ENCODE measurements at regions of chr10 and their contacts with region 1.

Region 1: GRCh38 chr10:58384999-58385783 is at the start of gene TFAM:
- DNase-seq: peak; percentile 96 to 98 (median 97)
- ATAC-seq: peak; percentile 95
- H3K4me3 ChIP-seq: peak within 1 kb of the TSS; percentile 86
- H3K27ac ChIP-seq: peak within 1 kb of the TSS; percentile 85
- H3K4me1 ChIP-seq: peaks cover 11 to 18% of the 10 kb centered on the region in 2 experiments
- H3K27me3 ChIP-seq: no peaks in the 10 kb centered on the region
- CTCF ChIP-seq: peak; percentile 83 to 91 (median 90)
- EP300 ChIP-seq: peak; percentile 40; the same call in 1 of the 2 replicates
- POLR2A ChIP-seq: peak; percentile 99
- RAD21 ChIP-seq: peak; percentile 86 to 91
- polyA plus RNA-seq, gene TFAM: 175 to 227 TPM

Region 2: GRCh38 chr10:58081353-58081752 is 303.8 kb before region 1 on chr10:
- CTCF ChIA-PET with region 1: no interaction called
- POLR2A ChIA-PET with region 1: no interaction called
- in situ Hi-C with region 1: no loop called
- intact Hi-C with region 1: no loop called
- DNase-seq: no peak
- ATAC-seq: no peak
- H3K4me3 ChIP-seq: no peak overlapping the region
- H3K27ac ChIP-seq: no peak overlapping the region
- H3K4me1 ChIP-seq: no peaks in the 10 kb centered on the region
- H3K27me3 ChIP-seq: no peaks in the 10 kb centered on the region
- CTCF ChIP-seq: no peak
- EP300 ChIP-seq: no peak
- POLR2A ChIP-seq: no peak
- RAD21 ChIP-seq: no peak

Region 3: GRCh38 chr10:58177362-58177947 is 207.7 kb before region 1 on chr10:
- CTCF ChIA-PET with region 1: interaction called, 10 read pairs
- POLR2A ChIA-PET with region 1: no interaction called
- in situ Hi-C with region 1: loop called (anchors 10 kb)
- intact Hi-C with region 1: loop called (anchors 1 kb)
- DNase-seq: peak; percentile 17 to 42 (median 20)
- ATAC-seq: peak; percentile 58
- H3K4me3 ChIP-seq: no peak overlapping the region
- H3K27ac ChIP-seq: no peak overlapping the region
- H3K4me1 ChIP-seq: peaks cover 0 to 16% of the 10 kb centered on the region in 2 experiments; a peak in 2 of 5 replicates
- H3K27me3 ChIP-seq: no peaks in the 10 kb centered on the region
- CTCF ChIP-seq: peak in 2 of 3 experiments; percentile 56 to 83; a peak in 4 of 6 replicates
- EP300 ChIP-seq: no peak
- POLR2A ChIP-seq: no peak
- RAD21 ChIP-seq: peak; percentile 84 to 90

Region 4: DNA sequence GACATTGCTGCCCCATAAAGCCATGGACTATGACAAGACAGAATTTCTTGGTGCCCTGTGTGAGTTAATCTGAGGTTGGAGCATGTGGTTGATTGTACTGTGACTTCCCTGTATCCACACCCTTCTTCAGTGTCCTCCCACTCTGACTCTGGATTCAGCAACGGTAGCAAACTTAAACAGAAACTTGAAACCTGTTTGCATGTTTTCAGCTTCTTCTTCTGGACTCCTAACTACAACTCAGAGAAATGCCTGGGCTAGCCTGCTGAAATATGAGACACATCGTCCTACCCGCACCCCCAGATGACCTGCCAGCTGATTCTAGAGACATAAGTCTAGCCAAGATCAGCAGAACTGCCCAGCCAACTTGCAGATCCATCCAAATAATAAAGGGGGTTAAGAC is 195.9 kb before region 1 on chr10:
- CTCF ChIA-PET with region 1: no interaction called
- POLR2A ChIA-PET with region 1: interaction called, 3 read pairs
- in situ Hi-C with region 1: loop called (anchors 10 kb)
- intact Hi-C with region 1: no loop called
- DNase-seq: peak in 1 of 4 experiments; percentile 18
- ATAC-seq: peak; percentile 78
- H3K4me3 ChIP-seq: no peak overlapping the region
- H3K27ac ChIP-seq: no peak overlapping the region
- H3K4me1 ChIP-seq: 0 out of 5 replicates have a peak, but pooled peaks cover 0 to 4% of the 10 kb centered on the region in 2 experiments
- H3K27me3 ChIP-seq: 0 out of 5 replicates have a peak, but pooled peaks cover 0 to 4% of the 10 kb centered on the region in 2 experiments
- CTCF ChIP-seq: no peak
- EP300 ChIP-seq: no peak
- POLR2A ChIP-seq: no peak
- RAD21 ChIP-seq: no peak; a peak in 1 of 4 replicates

Region 5: GRCh38 chr10:58299580-58299979 is 85.6 kb before region 1 on chr10:
- CTCF ChIA-PET with region 1: interaction called, 6 read pairs
- POLR2A ChIA-PET with region 1: interaction called, 4 read pairs
- in situ Hi-C with region 1: no loop called
- intact Hi-C with region 1: loop called (anchors 1 kb)
- DNase-seq: peak; percentile 71 to 83 (median 77)
- ATAC-seq: peak; percentile 99
- H3K4me3 ChIP-seq: no peak overlapping the region
- H3K27ac ChIP-seq: no peak overlapping the region
- H3K4me1 ChIP-seq: no peaks in the 10 kb centered on the region
- H3K27me3 ChIP-seq: no peaks in the 10 kb centered on the region
- CTCF ChIP-seq: peak; percentile 87 to 92 (median 87)
- EP300 ChIP-seq: no peak
- POLR2A ChIP-seq: no peak
- RAD21 ChIP-seq: peak; percentile 88 to 96

Region 6: GRCh38 chr10:58322072-58322834 is 62.9 kb before region 1 on chr10:
- CTCF ChIA-PET with region 1: no interaction called
- POLR2A ChIA-PET with region 1: no interaction called
- in situ Hi-C with region 1: no loop called
- intact Hi-C with region 1: loop called (anchors 5 kb)
- DNase-seq: peak in 1 of 4 experiments; percentile 38
- ATAC-seq: peak; percentile 26; the same call in 2 of the 3 replicates
- H3K4me3 ChIP-seq: no peak overlapping the region
- H3K27ac ChIP-seq: peak overlapping the region; percentile 11; the same call in 1 of the 3 replicates
- H3K4me1 ChIP-seq: peaks cover 5 to 18% of the 10 kb centered on the region in 2 experiments; a peak in 4 of 5 replicates
- H3K27me3 ChIP-seq: no peaks in the 10 kb centered on the region
- CTCF ChIP-seq: no peak
- EP300 ChIP-seq: no peak
- POLR2A ChIP-seq: no peak
- RAD21 ChIP-seq: no peak

Region 7: GRCh38 chr10:58334817-58335305 is 50.3 kb before region 1 on chr10 and contains the start of gene UBE2D1:
- CTCF ChIA-PET with region 1: no interaction called
- POLR2A ChIA-PET with region 1: interaction called, 8 read pairs
- in situ Hi-C with region 1: no loop called
- intact Hi-C with region 1: loop called (anchors 2 kb)
- DNase-seq: peak; percentile 64 to 92 (median 76)
- ATAC-seq: peak; percentile 99
- H3K4me3 ChIP-seq: peak within 1 kb of the TSS; percentile 85
- H3K27ac ChIP-seq: peak within 1 kb of the TSS; percentile 43; the same call in 1 of the 3 replicates
- H3K4me1 ChIP-seq: peaks cover 8 to 10% of the 10 kb centered on the region in 2 experiments; a peak in 4 of 5 replicates
- H3K27me3 ChIP-seq: no peaks in the 10 kb centered on the region
- CTCF ChIP-seq: peak in 2 of 3 experiments; percentile 10 to 13; a peak in 1 of 6 replicates
- EP300 ChIP-seq: no peak
- POLR2A ChIP-seq: peak; percentile 90
- RAD21 ChIP-seq: no peak
- polyA plus RNA-seq, gene UBE2D1: 4.1 to 6.4 TPM

Region 8: GRCh38 chr10:58396057-58396456 is 10.9 kb after region 1 on chr10:
- CTCF ChIA-PET with region 1: no interaction called
- POLR2A ChIA-PET with region 1: interaction called, 22 read pairs
- in situ Hi-C with region 1: no loop called
- intact Hi-C with region 1: no loop called
- DNase-seq: no peak
- ATAC-seq: no peak
- H3K4me3 ChIP-seq: no peak overlapping the region
- H3K27ac ChIP-seq: no peak overlapping the region
- H3K4me1 ChIP-seq: no peaks in the 10 kb centered on the region
- H3K27me3 ChIP-seq: no peaks in the 10 kb centered on the region
- CTCF ChIP-seq: no peak
- EP300 ChIP-seq: no peak
- POLR2A ChIP-seq: no peak
- RAD21 ChIP-seq: no peak

Region 9: GRCh38 chr10:58833771-58834561 is 448.8 kb after region 1 on chr10:
- CTCF ChIA-PET with region 1: no interaction called
- POLR2A ChIA-PET with region 1: no interaction called
- in situ Hi-C with region 1: no loop called
- intact Hi-C with region 1: no loop called
- DNase-seq: no peak
- ATAC-seq: no peak
- H3K4me3 ChIP-seq: no peak overlapping the region
- H3K27ac ChIP-seq: no peak overlapping the region
- H3K4me1 ChIP-seq: no peaks in the 10 kb centered on the region
- H3K27me3 ChIP-seq: no peaks in the 10 kb centered on the region
- CTCF ChIP-seq: no peak
- EP300 ChIP-seq: no peak
- POLR2A ChIP-seq: no peak
- RAD21 ChIP-seq: no peak